Panc1 (cell line): ENCODE measurements at regions of chr6 and their contacts with region 1.

Region 1: GRCh38 chr6:87929843-87930288 is 117.8 kb upstream of the SPACA1 start:
- DNase-seq: peak; percentile 64
- ATAC-seq: peak; percentile 99
- H3K4me3 ChIP-seq: no peak overlapping the region
- H3K27ac ChIP-seq: no peak overlapping the region
- H3K4me1 ChIP-seq: no peaks in the 10 kb centered on the region
- H3K27me3 ChIP-seq: 0 out of 2 replicates have a peak, but pooled peaks cover 5% of the 10 kb centered on the region
- CTCF ChIP-seq: peak; percentile 88

Region 2: DNA sequence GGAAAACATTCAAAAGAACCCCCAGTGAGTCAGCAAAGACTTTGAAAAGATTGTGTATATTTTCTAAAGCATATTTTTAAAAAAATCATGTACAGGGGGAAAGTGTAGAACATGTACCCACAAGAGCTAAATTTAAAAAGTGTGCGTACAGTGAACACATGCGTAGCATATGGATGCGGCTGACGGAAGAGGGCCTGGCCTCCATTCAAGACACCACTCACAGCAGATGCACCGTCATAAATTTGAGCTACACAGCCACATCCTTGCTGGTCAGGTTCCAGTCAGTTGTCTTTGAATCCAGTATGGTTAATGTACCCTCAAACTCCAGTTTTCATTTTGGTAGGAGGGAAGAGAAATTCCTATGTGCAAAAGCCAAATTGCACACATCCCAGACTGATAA is 63.5 kb after region 1 on chr6:
- CTCF ChIA-PET with region 1: no interaction called
- POLR2A ChIA-PET with region 1: no interaction called
- in situ Hi-C with region 1: no loop called
- intact Hi-C with region 1: no loop called
- DNase-seq: no peak
- ATAC-seq: no peak
- H3K4me3 ChIP-seq: no peak overlapping the region
- H3K27ac ChIP-seq: no peak overlapping the region
- H3K4me1 ChIP-seq: no peaks in the 10 kb centered on the region
- H3K27me3 ChIP-seq: no peaks in the 10 kb centered on the region
- CTCF ChIP-seq: no peak

Region 3: GRCh38 chr6:88238065-88238464 is 308.2 kb after region 1 on chr6:
- CTCF ChIA-PET with region 1: no interaction called
- POLR2A ChIA-PET with region 1: no interaction called
- in situ Hi-C with region 1: no loop called
- intact Hi-C with region 1: loop called (anchors 5 kb)
- DNase-seq: peak; percentile 12
- ATAC-seq: no peak; the same call in 1 of the 2 replicates
- H3K4me3 ChIP-seq: no peak overlapping the region
- H3K27ac ChIP-seq: no peak overlapping the region
- H3K4me1 ChIP-seq: no peaks in the 10 kb centered on the region
- H3K27me3 ChIP-seq: no peaks in the 10 kb centered on the region
- CTCF ChIP-seq: peak; percentile 61

Region 4: DNA sequence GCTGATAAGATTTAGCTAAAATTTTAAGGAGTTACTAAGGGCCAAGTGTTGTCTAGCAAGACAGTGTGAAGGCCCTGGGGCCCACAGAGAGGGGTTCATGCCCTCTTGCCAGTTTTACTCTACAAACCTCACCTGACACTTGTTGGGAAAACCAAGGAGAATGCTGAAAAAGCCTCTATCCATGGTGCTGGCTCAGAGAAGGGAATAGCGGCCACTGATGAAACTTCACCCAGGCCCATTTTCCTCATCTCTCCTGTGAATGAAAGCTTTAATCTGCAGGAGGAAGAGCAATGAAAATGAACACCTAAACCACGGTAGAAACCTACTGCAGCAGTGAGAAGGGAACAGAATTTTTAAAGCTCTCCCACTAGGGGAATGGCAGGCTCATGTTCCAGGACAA is 553.6 kb after region 1 on chr6:
- CTCF ChIA-PET with region 1: no interaction called
- POLR2A ChIA-PET with region 1: no interaction called
- in situ Hi-C with region 1: no loop called
- intact Hi-C with region 1: loop called (anchors 10 kb)
- DNase-seq: no peak
- ATAC-seq: no peak
- H3K4me3 ChIP-seq: no peak overlapping the region
- H3K27ac ChIP-seq: no peak overlapping the region
- H3K4me1 ChIP-seq: no peaks in the 10 kb centered on the region
- H3K27me3 ChIP-seq: no peaks in the 10 kb centered on the region
- CTCF ChIP-seq: no peak

Region 5: GRCh38 chr6:88780714-88781389 is 851.0 kb after region 1 on chr6:
- CTCF ChIA-PET with region 1: no interaction called
- POLR2A ChIA-PET with region 1: no interaction called
- in situ Hi-C with region 1: no loop called
- intact Hi-C with region 1: loop called (anchors 5 kb)
- DNase-seq: peak; percentile 46
- ATAC-seq: peak; percentile 83
- H3K4me3 ChIP-seq: no peak overlapping the region
- H3K27ac ChIP-seq: no peak overlapping the region
- H3K4me1 ChIP-seq: no peaks in the 10 kb centered on the region
- H3K27me3 ChIP-seq: no peaks in the 10 kb centered on the region
- CTCF ChIP-seq: peak; percentile 90

Region 6: DNA sequence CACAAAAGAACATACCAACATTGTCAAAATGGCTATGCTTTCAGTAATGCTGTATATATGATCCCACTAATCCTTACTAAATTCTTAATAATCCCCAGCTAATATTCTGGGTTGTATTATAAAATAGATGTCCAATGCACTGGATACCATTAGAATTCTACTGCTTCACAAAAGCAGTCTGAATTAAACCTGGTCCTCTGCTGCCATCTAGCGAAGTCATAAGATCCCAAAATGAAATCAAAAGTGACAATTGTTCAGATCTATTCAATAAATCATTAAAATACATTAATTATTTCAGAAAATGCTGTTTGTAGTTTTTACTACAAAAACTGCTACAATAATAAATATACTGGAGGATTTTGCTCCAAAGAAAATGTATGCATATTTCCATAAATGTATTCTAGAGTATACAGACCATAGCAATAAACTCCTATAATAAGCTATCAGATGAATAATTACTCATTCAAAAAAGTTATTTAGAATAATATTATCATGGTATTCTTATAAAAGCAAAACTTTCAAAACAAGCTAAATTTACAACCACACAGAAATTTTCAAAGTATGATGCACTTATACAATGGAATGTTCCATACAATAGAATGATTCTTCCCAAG is 941.0 kb after region 1 on chr6:
- CTCF ChIA-PET with region 1: interaction called, 3 read pairs
- POLR2A ChIA-PET with region 1: no interaction called
- in situ Hi-C with region 1: no loop called
- intact Hi-C with region 1: loop called (anchors 5 kb)
- DNase-seq: no peak
- ATAC-seq: no peak
- H3K4me3 ChIP-seq: no peak overlapping the region
- H3K27ac ChIP-seq: no peak overlapping the region
- H3K4me1 ChIP-seq: no peaks in the 10 kb centered on the region
- H3K27me3 ChIP-seq: no peaks in the 10 kb centered on the region
- CTCF ChIP-seq: peak; percentile 68; the same call in 1 of the 2 replicates